ENCODE measurements at regions of chr16 and their contacts with region 1.

Region 1: DNA sequence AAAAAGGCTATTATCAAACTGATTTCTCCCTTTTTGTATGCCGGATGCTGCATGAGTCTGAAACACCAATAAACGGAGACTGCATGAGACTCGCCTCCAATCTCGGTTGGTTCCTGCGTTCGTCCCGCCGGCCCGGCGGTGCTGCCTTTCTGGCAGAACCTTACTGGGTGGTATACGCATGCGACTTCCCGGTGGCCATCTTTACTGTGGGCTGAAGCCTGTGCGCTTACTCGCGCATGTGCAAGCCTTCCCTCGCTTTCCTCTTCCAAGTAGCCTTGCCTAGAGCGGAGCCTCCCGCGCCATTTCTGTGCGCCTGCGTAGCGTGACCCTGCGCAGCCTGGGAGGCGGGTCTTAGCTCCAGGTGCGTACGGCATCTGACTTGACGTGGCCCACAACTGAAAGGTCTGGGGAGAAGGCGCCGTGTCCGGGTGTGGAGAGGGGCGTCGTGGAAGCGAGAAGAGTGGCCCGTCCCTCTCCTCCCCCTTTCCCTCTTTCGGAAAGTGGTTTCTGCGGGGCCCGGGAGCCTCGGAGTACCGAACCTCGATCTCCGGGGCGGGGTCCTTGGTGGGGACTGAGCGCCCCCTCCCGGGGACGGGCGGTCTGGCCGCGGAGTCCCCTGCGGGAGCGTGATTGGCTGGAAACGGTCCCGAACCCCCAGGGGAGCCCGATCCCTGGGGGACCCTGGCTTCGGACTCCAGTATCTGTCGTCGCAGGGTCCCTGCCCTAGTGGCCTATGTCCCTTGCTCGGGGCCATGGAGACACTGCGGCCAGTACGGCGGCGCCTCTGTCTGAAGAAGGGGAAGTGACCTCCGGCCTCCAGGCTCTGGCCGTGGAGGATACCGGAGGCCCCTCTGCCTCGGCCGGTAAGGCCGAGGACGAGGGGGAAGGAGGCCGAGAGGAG is at the start of gene PAGR1:
- DNase-seq: peak; percentile 100
- H3K4me3 ChIP-seq: peak within 1 kb of the TSS; percentile 83
- H3K27ac ChIP-seq: peak within 1 kb of the TSS; percentile 80
- H3K27me3 ChIP-seq: no peaks in the 10 kb centered on the region
- CTCF ChIP-seq: peak; percentile 85
- polyA plus RNA-seq, gene PAGR1: 14.3 and 14.5 TPM in 2 replicates

Region 2: GRCh38 chr16:29775742-29776408 is 40.2 kb before region 1 on chr16:
- CTCF ChIA-PET with region 1: no interaction called
- POLR2A ChIA-PET with region 1: no interaction called
- DNase-seq: no peak
- H3K4me3 ChIP-seq: no peak overlapping the region
- H3K27ac ChIP-seq: no peak overlapping the region
- H3K27me3 ChIP-seq: peaks cover 15% of the 10 kb centered on the region
- CTCF ChIP-seq: no peak

Region 3: GRCh38 chr16:29868396-29869009 is 52.5 kb after region 1 on chr16:
- CTCF ChIA-PET with region 1: interaction called, 3 read pairs
- POLR2A ChIA-PET with region 1: interaction called, 10 read pairs
- DNase-seq: no peak
- H3K4me3 ChIP-seq: no peak overlapping the region
- H3K27ac ChIP-seq: no peak overlapping the region
- H3K27me3 ChIP-seq: no peaks in the 10 kb centered on the region
- CTCF ChIP-seq: no peak

Region 4: GRCh38 chr16:30018731-30019158 is 202.7 kb after region 1 on chr16:
- CTCF ChIA-PET with region 1: no interaction called
- POLR2A ChIA-PET with region 1: interaction called, 11 read pairs
- DNase-seq: no peak
- H3K4me3 ChIP-seq: no peak overlapping the region
- H3K27ac ChIP-seq: no peak overlapping the region
- H3K27me3 ChIP-seq: peaks cover 12% of the 10 kb centered on the region
- CTCF ChIP-seq: no peak

Measured in AG04450 (cell line).